Left ventricle myocardium superior (tissue), 1 donor: ENCODE measurements at regions of chr21 and their contacts with region 1.

Region 1: DNA sequence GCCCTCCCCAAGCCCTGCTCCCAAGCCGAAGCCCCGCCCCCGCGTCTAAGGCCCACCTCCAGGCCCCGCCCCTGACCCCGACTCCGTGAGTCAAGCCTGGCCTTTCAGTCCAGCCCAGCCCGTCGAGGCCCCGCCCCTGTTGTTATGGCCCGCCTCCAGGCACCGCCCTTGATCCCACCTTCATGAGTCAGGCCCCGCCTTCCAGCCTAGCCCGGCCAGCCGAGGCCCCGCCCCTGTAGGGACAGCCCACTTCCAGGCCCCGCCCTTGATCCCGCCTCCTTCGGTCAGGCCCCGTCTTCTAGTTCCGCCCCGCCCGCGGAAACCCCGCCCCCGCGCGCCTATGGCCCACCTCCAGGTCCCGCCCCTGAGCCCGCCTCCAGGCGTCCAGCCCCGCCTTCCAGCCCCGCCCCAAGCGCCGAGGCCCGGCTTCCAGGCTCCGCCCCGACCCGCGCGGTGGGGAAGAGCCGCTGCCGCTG is 247 bp upstream of the DOP1B start:
- DNase-seq: peak; percentile 100
- ATAC-seq: peak; percentile 93

Region 2: GRCh38 chr21:36330904-36331303 is 174.5 kb after region 1 on chr21:
- intact Hi-C with region 1: loop called (anchors 10 kb)
- DNase-seq: no peak
- ATAC-seq: peak; percentile 79